ENCODE measurements at regions of chr1 and their contacts with region 1.

Region 1: DNA sequence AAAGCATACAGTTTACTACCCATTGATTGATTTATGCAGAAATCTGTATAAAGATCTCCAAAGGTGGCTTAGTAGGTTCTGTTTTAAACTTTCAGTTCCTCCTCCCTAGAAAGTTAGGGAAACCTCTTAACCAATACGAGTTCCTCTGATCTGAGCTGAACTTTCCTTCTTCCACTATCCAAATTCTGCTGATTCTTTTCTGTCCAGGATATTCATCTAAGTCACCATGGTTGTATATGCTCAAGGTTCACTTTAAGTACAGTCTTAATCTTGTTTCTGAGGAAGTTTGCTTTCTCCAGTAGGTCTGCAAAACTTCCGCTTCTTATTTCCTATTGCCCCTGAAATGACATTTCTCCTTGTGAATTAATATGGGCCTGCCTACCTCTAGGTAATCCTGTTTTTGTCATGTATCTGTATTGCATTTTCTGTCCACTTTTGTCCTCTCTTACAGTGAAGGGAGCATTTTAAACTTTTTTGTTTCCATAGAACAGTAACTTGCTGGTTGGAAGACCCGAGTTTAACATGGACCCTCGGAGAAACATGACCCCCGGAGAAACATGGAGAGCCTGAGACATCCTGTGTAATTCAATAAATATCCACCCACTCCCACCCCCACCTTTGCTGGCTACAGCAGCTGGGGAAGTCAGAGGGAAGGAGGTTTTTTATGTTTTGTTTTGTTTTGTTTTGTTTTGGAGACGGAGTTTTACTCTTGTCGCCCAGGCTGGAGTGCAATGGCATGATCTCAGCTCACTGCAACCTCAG is 16.7 kb upstream of the TUT4 start:
- DNase-seq: no peak

Region 2: GRCh38 chr1:52368383-52369172 is 201.1 kb before region 1 on chr1:
- CTCF ChIA-PET with region 1: no interaction called
- POLR2A ChIA-PET with region 1: no interaction called
- DNase-seq: peak; percentile 65

Region 3: GRCh38 chr1:52552505-52553361 is 16.9 kb before region 1 on chr1 and contains the start of gene TUT4:
- CTCF ChIA-PET with region 1: interaction called, 3 read pairs
- POLR2A ChIA-PET with region 1: interaction called, 27 read pairs
- DNase-seq: peak; percentile 76

Measured in HEK293T (cell line).